ENCODE measurements at regions of chr2 and their contacts with region 1.

Region 1: GRCh38 chr2:233251306-233252116 is at the start of gene ATG16L1:
- DNase-seq: peak; percentile 89 to 98 (median 94)
- ATAC-seq: peak; percentile 91
- H3K4me3 ChIP-seq: peak within 1 kb of the TSS; percentile 90
- H3K4me3 Mint-ChIP-seq: peak within 1 kb of the TSS; percentile 90
- H3K27ac ChIP-seq: peak within 1 kb of the TSS; percentile 72 to 88
- H3K27ac Mint-ChIP-seq: peak within 1 kb of the TSS; percentile 76
- H3K4me1 ChIP-seq: peaks cover 76% of the 10 kb centered on the region
- H3K4me1 Mint-ChIP-seq: peaks cover 77% of the 10 kb centered on the region
- H3K27me3 ChIP-seq: no peaks in the 10 kb centered on the region
- H3K27me3 Mint-ChIP-seq: no peaks in the 10 kb centered on the region
- CTCF ChIP-seq: peak; percentile 91
- total RNA-seq, gene ATG16L1: 134 to 135 TPM

Region 2: DNA sequence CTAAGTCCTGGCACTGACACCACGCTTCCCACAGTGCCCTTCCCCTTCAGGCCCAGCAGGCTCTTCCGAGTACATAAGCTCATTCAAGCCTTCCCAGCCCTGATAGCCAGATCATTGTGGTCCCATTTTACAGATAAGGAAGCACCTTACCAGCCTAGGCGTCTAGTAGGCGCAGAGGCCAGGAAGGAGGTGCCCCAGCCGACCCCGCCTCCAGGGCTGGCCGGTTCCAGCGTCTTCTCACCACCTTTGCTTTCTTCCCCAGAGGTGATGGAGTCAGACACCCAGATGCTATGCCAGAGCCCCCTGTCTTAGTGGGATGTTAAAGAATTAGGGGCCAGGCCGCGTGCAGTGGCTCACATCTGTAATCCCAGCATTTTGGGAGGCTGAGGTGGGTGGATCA is 647.0 kb before region 1 on chr2:
- CTCF ChIA-PET with region 1: no interaction called
- POLR2A ChIA-PET with region 1: no interaction called
- intact Hi-C with region 1: loop called in 1 of 2 experiments (anchors 2 kb)
- DNase-seq: no peak
- ATAC-seq: no peak
- H3K4me3 ChIP-seq: no peak overlapping the region
- H3K4me3 Mint-ChIP-seq: no peak overlapping the region
- H3K27ac ChIP-seq: no peak overlapping the region
- H3K27ac Mint-ChIP-seq: no peak overlapping the region
- H3K4me1 ChIP-seq: peaks cover 9% of the 10 kb centered on the region
- H3K4me1 Mint-ChIP-seq: peaks cover 9% of the 10 kb centered on the region
- H3K27me3 ChIP-seq: no peaks in the 10 kb centered on the region
- H3K27me3 Mint-ChIP-seq: no peaks in the 10 kb centered on the region
- CTCF ChIP-seq: no peak

Region 3: GRCh38 chr2:232697100-232697865 is 554.2 kb before region 1 on chr2 and contains the start of gene GIGYF2:
- CTCF ChIA-PET with region 1: no interaction called
- POLR2A ChIA-PET with region 1: no interaction called
- intact Hi-C with region 1: loop called in 1 of 2 experiments (anchors 5 kb)
- DNase-seq: peak; percentile 84 to 97 (median 90)
- ATAC-seq: peak; percentile 83
- H3K4me3 ChIP-seq: peak within 1 kb of the TSS; percentile 95
- H3K4me3 Mint-ChIP-seq: peak within 1 kb of the TSS; percentile 97
- H3K27ac ChIP-seq: peak within 1 kb of the TSS; percentile 53 to 78
- H3K27ac Mint-ChIP-seq: peak within 1 kb of the TSS; percentile 91
- H3K4me1 ChIP-seq: peaks cover 31% of the 10 kb centered on the region
- H3K4me1 Mint-ChIP-seq: peaks cover 37% of the 10 kb centered on the region
- H3K27me3 ChIP-seq: no peaks in the 10 kb centered on the region
- H3K27me3 Mint-ChIP-seq: no peaks in the 10 kb centered on the region
- CTCF ChIP-seq: no peak
- total RNA-seq, gene GIGYF2: 52.5 to 55.5 TPM

Region 4: GRCh38 chr2:232854082-232854481 is 397.4 kb before region 1 on chr2:
- CTCF ChIA-PET with region 1: interaction called, 3 read pairs
- POLR2A ChIA-PET with region 1: interaction called, 3 read pairs
- intact Hi-C with region 1: loop called (anchors 1 kb)
- DNase-seq: no peak
- ATAC-seq: no peak
- H3K4me3 ChIP-seq: no peak overlapping the region
- H3K4me3 Mint-ChIP-seq: no peak overlapping the region
- H3K27ac ChIP-seq: no peak overlapping the region
- H3K27ac Mint-ChIP-seq: peak overlapping the region; percentile 25
- H3K4me1 ChIP-seq: no peaks in the 10 kb centered on the region
- H3K4me1 Mint-ChIP-seq: no peaks in the 10 kb centered on the region
- H3K27me3 ChIP-seq: no peaks in the 10 kb centered on the region
- H3K27me3 Mint-ChIP-seq: no peaks in the 10 kb centered on the region
- CTCF ChIP-seq: no peak

Region 5: GRCh38 chr2:233084488-233084887 is 167.0 kb before region 1 on chr2:
- CTCF ChIA-PET with region 1: interaction called, 3 read pairs
- POLR2A ChIA-PET with region 1: no interaction called
- intact Hi-C with region 1: loop called (anchors 5 kb)
- DNase-seq: peak in 9 of 14 experiments; percentile 31 to 83 (median 53)
- ATAC-seq: peak; percentile 32
- H3K4me3 ChIP-seq: peak overlapping the region; percentile 19
- H3K4me3 Mint-ChIP-seq: peak overlapping the region; percentile 83
- H3K27ac ChIP-seq: peak overlapping the region; percentile 67 to 71
- H3K27ac Mint-ChIP-seq: peak overlapping the region; percentile 85
- H3K4me1 ChIP-seq: peaks cover 94% of the 10 kb centered on the region
- H3K4me1 Mint-ChIP-seq: peaks cover 88% of the 10 kb centered on the region
- H3K27me3 ChIP-seq: no peaks in the 10 kb centered on the region
- H3K27me3 Mint-ChIP-seq: no peaks in the 10 kb centered on the region
- CTCF ChIP-seq: no peak

Region 6: GRCh38 chr2:233234264-233234663 is 17.2 kb before region 1 on chr2:
- CTCF ChIA-PET with region 1: interaction called, 19 read pairs
- POLR2A ChIA-PET with region 1: interaction called, 21 read pairs
- intact Hi-C with region 1: loop called in 1 of 2 experiments (anchors 2 kb)
- DNase-seq: peak in 2 of 14 experiments; percentile 28 to 30
- ATAC-seq: peak; percentile 32
- H3K4me3 ChIP-seq: no peak overlapping the region
- H3K4me3 Mint-ChIP-seq: peak overlapping the region; percentile 40
- H3K27ac ChIP-seq: peak overlapping the region in 1 of 2 donors; percentile 38
- H3K27ac Mint-ChIP-seq: peak overlapping the region; percentile 50
- H3K4me1 ChIP-seq: peaks cover 79% of the 10 kb centered on the region
- H3K4me1 Mint-ChIP-seq: peaks cover 46% of the 10 kb centered on the region
- H3K27me3 ChIP-seq: no peaks in the 10 kb centered on the region
- H3K27me3 Mint-ChIP-seq: no peaks in the 10 kb centered on the region
- CTCF ChIP-seq: no peak

Region 7: GRCh38 chr2:233331536-233331935 is 80.0 kb after region 1 on chr2:
- CTCF ChIA-PET with region 1: no interaction called
- POLR2A ChIA-PET with region 1: interaction called, 12 read pairs
- intact Hi-C with region 1: no loop called
- DNase-seq: peak; percentile 60 to 94 (median 73)
- ATAC-seq: peak; percentile 96
- H3K4me3 ChIP-seq: peak overlapping the region; percentile 5
- H3K4me3 Mint-ChIP-seq: peak overlapping the region; percentile 78
- H3K27ac ChIP-seq: peak overlapping the region; percentile 80 to 86
- H3K27ac Mint-ChIP-seq: peak overlapping the region; percentile 93
- H3K4me1 ChIP-seq: peaks cover 63% of the 10 kb centered on the region
- H3K4me1 Mint-ChIP-seq: peaks cover 57% of the 10 kb centered on the region
- H3K27me3 ChIP-seq: no peaks in the 10 kb centered on the region
- H3K27me3 Mint-ChIP-seq: no peaks in the 10 kb centered on the region
- CTCF ChIP-seq: no peak

Measured in CD4-positive, alpha-beta T cell (primary cell).